ENCODE measurements at regions of chr3 and their contacts with region 1.

Region 1: GRCh38 chr3:145518639-145519038 is 642.3 kb downstream of the PLOD2 start:
- DNase-seq: no peak
- ATAC-seq: no peak
- H3K4me3 ChIP-seq: no peak overlapping the region
- H3K27ac ChIP-seq: no peak overlapping the region
- H3K4me1 ChIP-seq: no peaks in the 10 kb centered on the region
- H3K27me3 ChIP-seq: no peaks in the 10 kb centered on the region
- CTCF ChIP-seq: no peak
- POLR2A ChIP-seq: no peak
- RAD21 ChIP-seq: no peak

Region 2: DNA sequence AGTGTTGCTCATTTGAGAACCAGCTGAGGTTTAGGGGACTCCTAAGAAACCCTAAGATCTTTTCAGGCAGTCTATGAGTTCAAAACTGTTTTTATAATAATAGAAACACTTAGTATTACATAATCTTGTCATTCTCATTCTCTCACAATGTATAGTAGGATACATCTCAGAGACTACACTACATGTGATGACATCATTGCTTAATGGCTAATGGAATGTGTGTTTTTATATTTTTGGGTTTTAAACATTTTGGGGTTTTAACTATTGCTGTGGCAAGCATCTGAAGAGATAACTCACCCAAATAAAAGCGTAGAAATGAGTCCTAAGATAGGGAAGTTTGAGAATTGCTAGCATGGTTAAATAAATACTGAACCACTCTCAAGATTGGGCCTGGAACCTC is 17.4 kb before region 1 on chr3:
- CTCF ChIA-PET with region 1: no interaction called
- POLR2A ChIA-PET with region 1: no interaction called
- dilution Hi-C with region 1: no loop called
- in situ Hi-C with region 1: no loop called
- intact Hi-C with region 1: loop called (anchors 2 kb)
- DNase-seq: no peak
- ATAC-seq: no peak
- H3K4me3 ChIP-seq: no peak overlapping the region
- H3K27ac ChIP-seq: no peak overlapping the region
- H3K4me1 ChIP-seq: no peaks in the 10 kb centered on the region
- H3K27me3 ChIP-seq: no peaks in the 10 kb centered on the region
- CTCF ChIP-seq: no peak
- POLR2A ChIP-seq: no peak
- RAD21 ChIP-seq: no peak